IMR-90 (cell line): ENCODE measurements at regions of chrX and their contacts with region 1.

Region 1: DNA sequence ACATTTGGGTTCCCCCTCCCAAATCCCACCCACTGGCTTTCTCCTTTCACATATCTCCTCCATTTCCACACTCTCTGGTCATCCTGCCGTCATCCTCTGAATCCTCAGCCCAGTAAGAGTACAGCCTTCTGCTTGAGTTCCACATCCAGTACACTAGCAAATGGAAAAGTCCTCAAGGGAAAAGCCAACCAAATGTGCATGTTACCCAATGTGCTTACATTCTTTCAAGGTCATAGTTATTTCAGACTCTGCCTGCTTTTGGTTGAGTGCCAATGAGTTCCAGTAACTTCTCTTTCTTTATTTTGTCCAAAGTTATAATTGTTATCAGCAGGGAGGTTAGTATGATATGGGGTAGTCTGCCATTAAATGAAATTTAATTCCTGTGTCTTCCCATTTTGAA is 78.1 kb downstream of the SRPX start:
- DNase-seq: peak; percentile 43
- ATAC-seq: peak; percentile 68
- H3K4me3 ChIP-seq: no peak overlapping the region
- H3K27ac ChIP-seq: peak overlapping the region; percentile 23; the same call in 1 of the 2 replicates
- H3K4me1 ChIP-seq: peaks cover 3% of the 10 kb centered on the region; the same call in 1 of the 2 replicates
- H3K27me3 ChIP-seq: no peaks in the 10 kb centered on the region; the same call in 1 of the 2 replicates
- CTCF ChIP-seq: no peak
- POLR2A ChIP-seq: no peak
- RAD21 ChIP-seq: no peak

Region 2: DNA sequence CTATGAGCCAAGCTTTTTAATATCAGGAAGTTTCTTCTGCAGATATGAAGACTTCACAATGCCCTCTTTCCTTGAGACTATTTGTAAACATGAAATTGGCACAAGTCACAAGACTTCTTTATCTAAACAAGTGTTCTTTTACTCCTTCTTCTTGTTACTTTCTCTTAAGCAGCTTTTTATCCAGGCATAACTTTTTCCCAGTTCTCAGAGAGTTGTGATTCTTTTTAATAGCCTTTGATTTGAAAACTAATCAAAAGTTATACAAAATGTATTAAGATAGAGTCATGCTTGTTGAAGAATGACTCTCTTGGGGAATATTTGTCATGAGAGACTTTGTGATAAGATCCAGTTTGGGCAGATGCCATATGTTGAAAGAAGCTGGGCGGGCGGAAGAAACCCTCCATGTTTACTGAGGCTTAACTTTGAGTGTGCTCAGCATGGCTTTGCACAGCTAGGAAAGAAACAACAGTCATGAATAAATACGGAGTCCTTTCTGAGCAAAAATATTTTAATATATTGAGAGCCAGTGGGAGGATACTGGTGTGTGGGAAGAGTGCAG is 97.0 kb before region 1 on chrX:
- CTCF ChIA-PET with region 1: no interaction called
- POLR2A ChIA-PET with region 1: no interaction called
- dilution Hi-C with region 1: no loop called
- in situ Hi-C with region 1: loop called (anchors 25 kb)
- intact Hi-C with region 1: no loop called
- DNase-seq: no peak
- ATAC-seq: no peak
- H3K4me3 ChIP-seq: no peak overlapping the region
- H3K27ac ChIP-seq: no peak overlapping the region
- H3K4me1 ChIP-seq: no peaks in the 10 kb centered on the region
- H3K27me3 ChIP-seq: no peaks in the 10 kb centered on the region
- CTCF ChIP-seq: no peak
- POLR2A ChIP-seq: no peak
- RAD21 ChIP-seq: no peak

Region 3: DNA sequence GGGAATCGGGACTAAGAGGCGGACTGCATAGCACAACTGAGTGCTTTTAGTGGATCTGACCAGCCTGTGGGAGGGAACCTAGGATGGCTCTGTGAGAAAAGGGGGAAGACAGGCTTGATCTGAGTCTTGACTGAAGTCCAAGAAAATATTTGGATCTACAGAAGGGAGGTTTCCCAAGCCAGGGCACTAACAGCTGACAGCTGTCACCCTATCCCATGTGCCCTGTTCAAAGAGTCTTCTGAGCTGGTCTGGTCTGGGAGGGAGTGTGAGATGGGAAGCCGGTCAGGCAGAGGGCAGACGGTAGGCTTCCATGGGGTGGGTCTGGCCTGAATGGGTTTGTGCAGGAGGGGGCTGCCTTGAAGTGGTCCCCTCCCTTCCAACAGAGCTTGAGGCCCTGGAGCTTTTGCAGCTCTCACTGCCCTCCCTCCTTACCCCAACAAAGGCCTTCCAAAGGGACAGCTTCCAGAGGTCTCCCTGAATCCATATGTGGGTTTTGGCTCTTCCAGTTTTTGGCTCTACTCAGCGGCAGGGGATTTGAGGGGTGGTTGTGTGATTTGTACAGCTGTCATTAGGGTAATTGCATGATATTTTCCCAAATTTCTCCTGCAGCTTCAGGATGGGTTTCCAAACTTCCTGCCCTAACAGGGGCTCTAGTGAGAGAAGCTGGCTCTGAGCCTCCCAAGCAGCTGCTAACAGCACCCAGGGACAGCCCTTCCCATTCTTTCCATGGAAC is 1311.4 kb after region 1 on chrX:
- CTCF ChIA-PET with region 1: no interaction called
- POLR2A ChIA-PET with region 1: no interaction called
- dilution Hi-C with region 1: no loop called
- in situ Hi-C with region 1: no loop called
- intact Hi-C with region 1: no loop called
- DNase-seq: no peak
- ATAC-seq: no peak
- H3K4me3 ChIP-seq: no peak overlapping the region
- H3K27ac ChIP-seq: no peak overlapping the region
- H3K4me1 ChIP-seq: no peaks in the 10 kb centered on the region
- H3K27me3 ChIP-seq: peaks cover 25% of the 10 kb centered on the region
- CTCF ChIP-seq: no peak
- POLR2A ChIP-seq: no peak
- RAD21 ChIP-seq: no peak